ENCODE measurements at regions of chr10 and their contacts with region 1.

Region 1: GRCh38 chr10:60677531-60678129 is 100.6 kb upstream of the CDK1 start:
- DNase-seq: no peak
- ATAC-seq: no peak
- H3K4me3 ChIP-seq: no peak overlapping the region
- H3K27ac ChIP-seq: no peak overlapping the region
- H3K4me1 ChIP-seq: no peaks in the 10 kb centered on the region
- H3K27me3 ChIP-seq: peaks cover 8% of the 10 kb centered on the region
- CTCF ChIP-seq: no peak
- POLR2A ChIP-seq: no peak
- RAD21 ChIP-seq: no peak

Region 2: GRCh38 chr10:60589376-60589775 is 88.3 kb before region 1 on chr10:
- CTCF ChIA-PET with region 1: no interaction called
- POLR2A ChIA-PET with region 1: interaction called, 10 read pairs
- dilution Hi-C with region 1: no loop called
- in situ Hi-C with region 1: no loop called
- intact Hi-C with region 1: no loop called
- DNase-seq: no peak
- ATAC-seq: no peak
- H3K4me3 ChIP-seq: no peak overlapping the region
- H3K27ac ChIP-seq: no peak overlapping the region
- H3K4me1 ChIP-seq: no peaks in the 10 kb centered on the region
- H3K27me3 ChIP-seq: peaks cover 1% of the 10 kb centered on the region
- CTCF ChIP-seq: no peak
- POLR2A ChIP-seq: no peak
- RAD21 ChIP-seq: no peak

Region 3: DNA sequence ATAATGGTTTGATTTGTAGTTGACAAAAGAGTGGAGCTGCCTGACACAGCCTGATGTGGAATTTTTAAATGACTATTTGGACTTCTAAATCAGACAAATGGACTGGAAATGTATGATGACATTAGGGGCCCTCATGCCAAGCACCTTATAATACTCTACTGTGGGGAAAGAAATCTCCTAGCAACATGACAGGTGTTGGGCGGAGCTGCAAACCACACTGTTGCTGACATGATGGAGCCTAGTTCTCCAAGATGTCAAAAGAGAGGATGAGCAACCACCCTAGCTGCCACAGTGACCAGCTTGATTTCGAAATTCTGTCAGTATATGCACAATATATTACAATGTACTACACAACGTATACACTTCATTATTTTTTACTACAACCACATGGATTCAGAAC is 200.6 kb after region 1 on chr10:
- CTCF ChIA-PET with region 1: no interaction called
- POLR2A ChIA-PET with region 1: no interaction called
- dilution Hi-C with region 1: no loop called
- in situ Hi-C with region 1: no loop called
- intact Hi-C with region 1: no loop called
- DNase-seq: no peak
- ATAC-seq: no peak
- H3K4me3 ChIP-seq: no peak overlapping the region
- H3K27ac ChIP-seq: no peak overlapping the region
- H3K4me1 ChIP-seq: no peaks in the 10 kb centered on the region
- H3K27me3 ChIP-seq: no peaks in the 10 kb centered on the region
- CTCF ChIP-seq: no peak
- POLR2A ChIP-seq: no peak
- RAD21 ChIP-seq: no peak